ENCODE measurements at regions of chr20 and their contacts with region 1.

Region 1: DNA sequence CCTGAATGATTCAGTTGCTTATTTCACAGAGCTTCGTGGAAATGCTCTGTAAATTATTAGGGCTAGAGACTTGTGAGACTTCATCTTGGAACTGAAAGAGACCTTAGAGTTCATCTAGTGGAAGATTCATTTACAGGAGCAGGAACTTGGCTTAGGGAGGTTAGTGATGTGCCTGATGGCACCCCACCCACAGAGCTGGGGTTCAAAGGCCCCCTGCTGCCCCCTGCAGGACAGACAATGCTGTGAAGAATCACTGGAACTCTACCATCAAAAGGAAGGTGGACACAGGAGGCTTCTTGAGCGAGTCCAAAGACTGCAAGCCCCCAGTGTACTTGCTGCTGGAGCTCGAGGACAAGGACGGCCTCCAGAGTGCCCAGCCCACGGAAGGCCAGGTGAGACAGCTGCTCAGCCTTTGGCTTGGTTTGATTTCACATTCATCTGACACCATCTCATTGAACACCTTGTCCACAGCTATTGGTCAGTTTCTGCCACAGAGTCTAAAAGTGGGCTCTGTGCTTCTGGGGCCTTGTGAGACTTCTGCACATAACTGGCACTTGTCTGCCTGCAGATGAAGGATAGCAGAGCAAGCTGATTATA is 25.1 kb downstream of the MYBL2 start:
- DNase-seq: peak; percentile 83
- ATAC-seq: peak; percentile 93
- H3K4me3 ChIP-seq: no peak overlapping the region
- H3K4me3 Mint-ChIP-seq: no peak overlapping the region
- H3K27ac ChIP-seq: no peak overlapping the region
- H3K27ac Mint-ChIP-seq: peak overlapping the region; percentile 74
- H3K4me1 ChIP-seq: peaks cover 0 to 6% of the 10 kb centered on the region in 2 donors
- H3K4me1 Mint-ChIP-seq: peaks cover 6% of the 10 kb centered on the region
- H3K27me3 ChIP-seq: no peaks in the 10 kb centered on the region
- H3K27me3 Mint-ChIP-seq: no peaks in the 10 kb centered on the region
- CTCF ChIP-seq: peak; percentile 81

Region 2: DNA sequence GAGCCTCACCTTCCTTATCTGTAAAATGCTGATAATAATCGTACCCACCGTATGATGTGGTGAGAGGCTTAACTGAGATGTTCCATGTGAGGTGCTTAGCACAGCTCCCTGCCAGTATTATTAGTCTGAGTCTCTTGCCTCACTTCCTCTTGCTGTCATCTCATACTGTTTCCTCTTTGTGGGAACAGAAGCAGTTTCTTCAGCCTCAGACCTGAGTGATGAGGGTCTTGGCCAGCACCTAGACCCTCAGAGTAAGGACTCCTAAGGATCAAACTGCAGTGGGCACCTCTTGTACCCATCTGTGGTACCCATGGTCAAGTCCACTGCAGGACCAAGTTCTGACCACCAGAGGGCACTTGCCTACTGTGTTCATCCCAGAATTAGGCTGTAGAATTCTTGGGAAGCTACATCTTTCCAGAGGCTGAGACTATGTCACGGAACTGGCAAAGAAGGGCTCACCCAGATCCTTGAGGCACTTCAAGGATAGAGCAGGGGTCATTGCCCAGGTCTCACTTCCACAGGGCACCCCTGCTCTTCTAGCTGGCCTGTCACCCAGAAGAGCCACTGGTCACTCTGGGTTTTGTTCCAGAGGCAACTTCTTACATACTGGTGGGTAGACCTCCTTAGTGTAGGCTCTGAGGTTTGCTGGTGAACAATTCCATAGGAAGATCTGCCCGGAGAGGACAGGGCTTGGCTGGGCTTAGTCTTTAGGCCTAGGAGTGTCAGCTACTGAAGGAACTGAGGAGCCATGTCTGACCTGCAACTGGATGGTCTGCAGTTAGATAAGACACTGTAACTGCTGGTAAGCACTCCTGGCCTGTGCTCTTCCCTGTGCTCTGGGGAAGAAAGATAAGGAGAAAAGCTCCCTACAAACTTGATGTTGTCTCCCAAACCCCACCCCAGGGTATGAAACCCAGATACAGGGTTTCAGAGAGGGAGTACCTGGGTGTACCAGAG is 153.8 kb before region 1 on chr20:
- CTCF ChIA-PET with region 1: interaction called, 273 read pairs
- POLR2A ChIA-PET with region 1: interaction called, 3 read pairs
- intact Hi-C with region 1: no loop called
- DNase-seq: peak; percentile 70
- ATAC-seq: peak; percentile 41
- H3K4me3 ChIP-seq: no peak overlapping the region
- H3K4me3 Mint-ChIP-seq: no peak overlapping the region
- H3K27ac ChIP-seq: no peak overlapping the region
- H3K27ac Mint-ChIP-seq: no peak overlapping the region
- H3K4me1 ChIP-seq: peaks cover 0 to 4% of the 10 kb centered on the region in 2 donors
- H3K4me1 Mint-ChIP-seq: peaks cover 2% of the 10 kb centered on the region
- H3K27me3 ChIP-seq: no peaks in the 10 kb centered on the region
- H3K27me3 Mint-ChIP-seq: no peaks in the 10 kb centered on the region
- CTCF ChIP-seq: peak; percentile 92

Region 3: GRCh38 chr20:43558412-43559146 is 133.4 kb before region 1 on chr20 and contains the start of gene SGK2:
- CTCF ChIA-PET with region 1: interaction called, 14 read pairs
- POLR2A ChIA-PET with region 1: no interaction called
- intact Hi-C with region 1: loop called (anchors 1 kb)
- DNase-seq: no peak
- ATAC-seq: no peak
- H3K4me3 ChIP-seq: no peak within 1 kb of the TSS
- H3K4me3 Mint-ChIP-seq: no peak within 1 kb of the TSS
- H3K27ac ChIP-seq: no peak within 1 kb of the TSS
- H3K27ac Mint-ChIP-seq: no peak within 1 kb of the TSS
- H3K4me1 ChIP-seq: no peaks in the 10 kb centered on the region
- H3K4me1 Mint-ChIP-seq: no peaks in the 10 kb centered on the region
- H3K27me3 ChIP-seq: no peaks in the 10 kb centered on the region
- H3K27me3 Mint-ChIP-seq: no peaks in the 10 kb centered on the region
- CTCF ChIP-seq: no peak
- total RNA-seq, gene SGK2: 1.7 and 2.4 TPM in 2 replicates

Region 4: GRCh38 chr20:43590392-43591323 is 101.4 kb before region 1 on chr20 and contains the start of gene IFT52:
- CTCF ChIA-PET with region 1: interaction called, 4 read pairs
- POLR2A ChIA-PET with region 1: interaction called, 4 read pairs
- intact Hi-C with region 1: loop called (anchors 1 kb)
- DNase-seq: peak; percentile 94
- ATAC-seq: peak; percentile 97
- H3K4me3 ChIP-seq: peak within 1 kb of the TSS; percentile 67 to 80 (median 75)
- H3K4me3 Mint-ChIP-seq: peak within 1 kb of the TSS; percentile 93
- H3K27ac ChIP-seq: peak within 1 kb of the TSS; percentile 66 to 92
- H3K27ac Mint-ChIP-seq: peak within 1 kb of the TSS; percentile 95
- H3K4me1 ChIP-seq: peaks cover 9 to 15% of the 10 kb centered on the region in 2 donors
- H3K4me1 Mint-ChIP-seq: peaks cover 18% of the 10 kb centered on the region
- H3K27me3 ChIP-seq: no peaks in the 10 kb centered on the region
- H3K27me3 Mint-ChIP-seq: peaks cover 5% of the 10 kb centered on the region
- CTCF ChIP-seq: no peak
- total RNA-seq, gene IFT52: 16.7 and 23.7 TPM in 2 replicates

Region 5: GRCh38 chr20:43681468-43681942 is 10.5 kb before region 1 on chr20:
- CTCF ChIA-PET with region 1: interaction called, 50 read pairs
- POLR2A ChIA-PET with region 1: interaction called, 4 read pairs
- intact Hi-C with region 1: loop called (anchors 1 kb)
- DNase-seq: peak; percentile 83
- ATAC-seq: peak; percentile 37
- H3K4me3 ChIP-seq: peak overlapping the region; percentile 11 to 68 (median 43)
- H3K4me3 Mint-ChIP-seq: peak overlapping the region; percentile 70
- H3K27ac ChIP-seq: peak overlapping the region; percentile 98 to 99
- H3K27ac Mint-ChIP-seq: peak overlapping the region; percentile 97
- H3K4me1 ChIP-seq: peaks cover 38 to 60% of the 10 kb centered on the region in 2 donors
- H3K4me1 Mint-ChIP-seq: peaks cover 51% of the 10 kb centered on the region
- H3K27me3 ChIP-seq: no peaks in the 10 kb centered on the region
- H3K27me3 Mint-ChIP-seq: no peaks in the 10 kb centered on the region
- CTCF ChIP-seq: peak; percentile 51

Region 6: DNA sequence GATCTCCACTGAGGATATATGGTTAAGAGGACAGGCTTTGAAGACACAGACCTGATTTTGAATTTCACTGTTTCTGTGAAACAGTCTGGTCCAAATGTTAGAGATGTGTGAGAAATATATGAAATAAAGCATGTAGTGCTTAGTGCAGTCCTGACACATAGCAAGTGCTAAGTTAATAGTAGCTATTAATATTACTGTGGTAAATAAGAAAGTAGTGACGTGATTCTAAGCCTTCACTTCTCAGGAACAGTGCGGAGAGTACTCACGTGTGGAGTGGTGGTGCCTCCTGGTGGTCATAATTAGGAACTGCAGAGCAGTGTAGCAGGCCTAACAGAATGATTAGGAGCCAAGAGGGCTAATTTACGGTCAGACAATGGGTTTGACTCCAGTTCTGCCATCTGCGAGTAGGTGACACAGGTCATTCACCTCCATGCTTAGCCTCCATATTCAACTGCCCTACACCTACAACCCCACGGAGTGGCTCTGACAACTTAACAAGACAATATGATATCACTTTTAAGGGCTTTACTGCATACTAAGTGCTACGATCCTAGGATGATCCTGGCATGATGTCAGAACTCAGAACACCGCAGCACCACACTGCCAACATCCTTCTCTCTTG is 388.7 kb after region 1 on chr20:
- CTCF ChIA-PET with region 1: interaction called, 8 read pairs
- POLR2A ChIA-PET with region 1: no interaction called
- intact Hi-C with region 1: loop called (anchors 1 kb)
- DNase-seq: peak; percentile 81
- ATAC-seq: peak; percentile 97
- H3K4me3 ChIP-seq: no peak overlapping the region
- H3K4me3 Mint-ChIP-seq: no peak overlapping the region
- H3K27ac ChIP-seq: no peak overlapping the region
- H3K27ac Mint-ChIP-seq: peak overlapping the region; percentile 26
- H3K4me1 ChIP-seq: no peaks in the 10 kb centered on the region
- H3K4me1 Mint-ChIP-seq: peaks cover 8% of the 10 kb centered on the region
- H3K27me3 ChIP-seq: no peaks in the 10 kb centered on the region
- H3K27me3 Mint-ChIP-seq: no peaks in the 10 kb centered on the region
- CTCF ChIP-seq: peak; percentile 99